ENCODE measurements at regions of chr16 and their contacts with region 1.

Region 1: DNA sequence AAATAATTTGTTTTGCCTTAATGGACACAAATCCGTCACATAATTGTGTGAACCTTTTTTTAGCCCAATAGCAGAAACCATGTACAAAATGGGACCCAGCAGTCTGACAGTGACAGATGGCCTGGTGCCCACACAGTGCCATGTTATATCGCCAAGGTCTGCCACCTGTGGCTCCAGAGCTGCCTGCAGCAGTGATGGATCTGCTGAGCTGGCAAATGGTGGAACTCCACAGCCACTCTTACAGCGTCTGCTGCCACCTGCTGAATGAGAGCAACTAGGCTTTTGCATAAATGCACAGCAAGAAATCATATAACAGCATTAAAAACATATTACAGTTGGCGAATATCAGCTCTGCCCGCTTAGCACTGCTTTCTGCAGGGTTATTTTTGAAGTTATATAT is 59.4 kb downstream of the NUP93 start:
- DNase-seq: no peak
- H3K4me3 ChIP-seq: no peak overlapping the region
- CTCF ChIP-seq: peak; percentile 50

Region 2: GRCh38 chr16:56643080-56643778 is 146.1 kb before region 1 on chr16:
- CTCF ChIA-PET with region 1: no interaction called
- POLR2A ChIA-PET with region 1: no interaction called
- DNase-seq: no peak
- H3K4me3 ChIP-seq: peak overlapping the region; percentile 30
- CTCF ChIP-seq: peak; percentile 9

Region 3: DNA sequence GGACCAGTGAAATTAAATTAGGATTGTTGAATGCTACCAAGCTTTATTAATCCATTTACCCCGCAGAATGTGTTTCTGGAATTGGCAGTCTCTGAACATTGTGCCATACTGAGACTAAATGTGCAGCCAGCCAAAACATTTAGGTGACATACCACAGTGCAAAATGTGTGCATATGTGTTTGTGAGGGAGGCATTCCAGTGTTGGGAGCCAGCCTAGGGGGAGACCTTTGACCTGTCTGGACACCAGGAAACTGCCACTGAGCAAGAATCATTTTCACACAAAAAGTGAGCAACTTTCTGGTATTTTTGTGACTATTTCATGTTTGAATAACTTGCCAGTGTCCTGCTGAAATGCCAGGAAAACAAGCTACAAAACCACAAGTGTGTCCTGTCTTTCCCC is 11.0 kb after region 1 on chr16:
- CTCF ChIA-PET with region 1: interaction called, 108 read pairs
- POLR2A ChIA-PET with region 1: no interaction called
- DNase-seq: no peak
- H3K4me3 ChIP-seq: no peak overlapping the region
- CTCF ChIP-seq: no peak

Region 4: DNA sequence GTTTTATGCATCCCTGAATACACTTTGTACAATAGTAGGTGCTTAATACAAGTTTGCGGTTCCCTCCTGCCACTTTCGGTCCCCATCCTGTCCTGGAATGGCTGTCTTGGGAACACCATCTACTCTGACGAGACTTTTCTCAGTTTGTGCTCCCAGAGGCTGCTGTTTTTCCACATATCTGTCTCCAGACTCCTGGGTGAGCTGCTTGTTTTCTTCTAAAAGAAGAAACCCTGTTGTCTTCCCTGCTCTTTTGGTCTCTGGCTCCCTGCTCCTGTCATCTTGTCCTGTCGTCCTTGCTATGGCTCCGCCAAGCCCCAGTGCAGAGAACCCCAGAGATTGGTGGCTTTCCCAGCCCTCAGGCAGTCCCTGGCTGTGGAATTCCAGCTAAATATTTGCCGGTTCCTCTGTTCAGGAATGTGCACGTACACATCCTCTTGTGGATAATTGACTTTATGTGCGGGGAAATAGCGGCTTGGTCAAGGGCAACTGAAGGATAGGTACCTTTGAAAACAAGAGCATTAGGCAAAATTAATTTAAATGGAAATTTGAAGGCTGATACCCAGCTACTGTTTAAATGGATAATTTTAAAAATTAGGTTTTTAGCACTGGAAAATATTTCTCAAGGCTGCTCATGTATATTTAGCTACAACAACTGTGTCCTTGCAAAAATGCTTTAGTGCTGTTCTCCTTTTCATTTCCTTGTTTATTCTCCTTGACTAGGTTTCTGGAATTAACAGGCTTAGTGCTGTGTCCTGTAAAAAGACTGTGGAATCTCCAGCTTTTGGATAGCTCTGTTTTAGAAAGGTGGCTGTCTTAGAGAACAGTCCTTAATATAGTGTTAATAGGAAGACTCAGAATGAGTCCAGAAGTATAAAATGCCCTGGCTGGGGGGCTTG is 25.4 kb after region 1 on chr16:
- CTCF ChIA-PET with region 1: interaction called, 28 read pairs
- POLR2A ChIA-PET with region 1: no interaction called
- DNase-seq: no peak
- H3K4me3 ChIP-seq: no peak overlapping the region
- CTCF ChIP-seq: no peak

Region 5: DNA sequence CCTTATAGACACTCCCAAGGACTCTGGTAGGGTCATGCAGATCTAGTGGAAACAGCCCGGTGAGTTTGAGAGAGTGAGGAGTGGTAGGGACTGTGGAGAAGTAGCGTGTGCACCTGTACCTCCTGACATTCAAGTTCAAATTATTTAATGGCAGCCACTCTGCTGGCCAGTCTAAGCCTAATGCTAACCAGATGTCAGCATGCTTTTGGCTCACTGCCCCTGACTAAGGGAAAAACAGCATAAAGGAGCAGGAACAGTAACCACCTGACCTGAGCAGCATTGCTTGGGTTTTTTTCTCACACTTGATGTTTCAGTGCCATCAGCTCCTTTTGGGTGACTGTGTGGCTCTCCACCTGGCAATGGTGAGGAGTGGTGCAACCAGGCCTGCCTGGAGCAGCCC is 51.9 kb after region 1 on chr16:
- CTCF ChIA-PET with region 1: interaction called, 13 read pairs
- POLR2A ChIA-PET with region 1: no interaction called
- DNase-seq: no peak
- H3K4me3 ChIP-seq: no peak overlapping the region
- CTCF ChIP-seq: no peak

Region 6: GRCh38 chr16:56898847-56899246 is 109.5 kb after region 1 on chr16:
- CTCF ChIA-PET with region 1: no interaction called
- POLR2A ChIA-PET with region 1: no interaction called
- DNase-seq: no peak
- H3K4me3 ChIP-seq: no peak overlapping the region
- CTCF ChIP-seq: no peak

Region 7: DNA sequence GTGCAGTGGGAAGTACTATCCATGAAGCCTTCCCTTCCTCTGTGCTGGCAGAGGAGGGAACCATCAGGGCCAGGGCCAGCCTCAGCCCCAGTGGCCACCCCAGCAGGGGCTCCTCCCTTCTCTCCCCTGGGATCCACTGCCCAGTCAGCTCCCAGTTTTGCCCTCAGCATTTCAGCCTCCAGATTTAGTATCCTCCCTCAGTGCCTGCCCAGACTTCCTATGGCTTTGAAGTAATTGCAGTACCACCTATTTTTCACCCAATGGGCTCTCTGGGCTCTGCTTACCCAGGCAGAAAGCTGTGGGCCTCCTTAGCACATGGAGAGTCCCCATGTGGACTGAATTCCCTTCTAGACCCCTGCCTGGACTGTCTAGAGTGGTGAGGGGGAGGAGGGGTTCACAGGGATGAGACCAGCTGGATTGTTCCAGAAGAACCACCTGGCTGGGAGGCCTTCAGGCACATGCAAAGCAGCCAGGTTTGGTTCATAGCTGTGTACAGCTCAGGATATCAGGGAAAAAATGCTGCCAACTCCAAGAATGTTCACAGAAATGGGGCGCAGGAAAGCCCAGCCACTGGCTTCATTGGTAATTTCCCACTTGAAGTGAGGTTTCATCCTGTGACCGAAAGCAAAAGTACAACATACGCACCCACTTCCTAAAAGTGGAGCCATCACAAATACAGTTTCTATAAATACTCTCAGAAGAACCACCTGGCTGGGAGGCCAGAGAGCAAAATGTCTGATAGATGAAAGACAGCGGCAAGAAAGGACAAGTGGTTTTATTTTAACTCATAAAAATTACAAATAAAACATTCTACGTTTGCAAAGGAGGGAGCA is 127.4 kb after region 1 on chr16:
- CTCF ChIA-PET with region 1: no interaction called
- POLR2A ChIA-PET with region 1: no interaction called
- DNase-seq: no peak
- H3K4me3 ChIP-seq: no peak overlapping the region
- CTCF ChIP-seq: no peak

Region 8: DNA sequence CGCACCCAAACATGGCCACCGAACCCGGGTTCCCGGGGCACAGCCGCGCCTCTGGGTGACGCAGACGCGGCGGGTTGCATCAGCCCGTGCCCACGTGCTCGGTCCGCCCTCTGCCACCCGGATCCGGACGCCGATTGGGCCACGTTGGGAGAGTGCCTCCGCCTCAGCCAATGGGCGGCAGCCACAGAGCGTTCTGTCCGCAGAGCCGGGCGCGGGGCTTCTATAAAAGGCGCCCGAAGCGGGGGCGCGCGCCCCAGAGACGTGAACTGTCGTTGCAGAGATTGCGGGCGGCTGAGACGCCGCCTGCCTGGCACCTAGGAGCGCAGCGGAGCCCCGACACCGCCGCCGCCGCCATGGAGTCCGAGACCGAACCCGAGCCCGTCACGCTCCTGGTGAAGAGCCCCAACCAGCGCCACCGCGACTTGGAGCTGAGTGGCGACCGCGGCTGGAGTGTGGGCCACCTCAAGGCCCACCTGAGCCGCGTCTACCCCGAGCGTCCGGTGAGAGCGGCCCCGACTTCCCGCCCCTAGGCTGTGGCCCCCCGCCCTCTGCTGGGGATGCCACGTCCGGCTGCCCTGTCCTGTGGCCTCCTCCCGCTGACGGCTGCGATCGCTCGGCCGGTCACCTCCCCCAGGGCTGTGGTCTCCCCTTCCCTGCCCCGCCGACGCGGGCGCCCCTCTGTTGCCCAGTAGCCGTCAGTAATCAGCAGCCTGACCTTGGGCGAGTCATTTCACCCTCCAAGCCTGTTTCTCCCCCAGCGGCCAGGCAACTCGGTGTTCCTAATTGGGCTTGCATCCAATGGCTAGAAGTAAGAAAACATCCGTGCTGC is 142.7 kb after region 1 on chr16 and contains the start of gene HERPUD1:
- CTCF ChIA-PET with region 1: interaction called, 14 read pairs
- POLR2A ChIA-PET with region 1: interaction called, 4 read pairs
- DNase-seq: peak; percentile 82
- H3K4me3 ChIP-seq: peak within 1 kb of the TSS; percentile 89
- CTCF ChIP-seq: peak; percentile 2

Region 9: DNA sequence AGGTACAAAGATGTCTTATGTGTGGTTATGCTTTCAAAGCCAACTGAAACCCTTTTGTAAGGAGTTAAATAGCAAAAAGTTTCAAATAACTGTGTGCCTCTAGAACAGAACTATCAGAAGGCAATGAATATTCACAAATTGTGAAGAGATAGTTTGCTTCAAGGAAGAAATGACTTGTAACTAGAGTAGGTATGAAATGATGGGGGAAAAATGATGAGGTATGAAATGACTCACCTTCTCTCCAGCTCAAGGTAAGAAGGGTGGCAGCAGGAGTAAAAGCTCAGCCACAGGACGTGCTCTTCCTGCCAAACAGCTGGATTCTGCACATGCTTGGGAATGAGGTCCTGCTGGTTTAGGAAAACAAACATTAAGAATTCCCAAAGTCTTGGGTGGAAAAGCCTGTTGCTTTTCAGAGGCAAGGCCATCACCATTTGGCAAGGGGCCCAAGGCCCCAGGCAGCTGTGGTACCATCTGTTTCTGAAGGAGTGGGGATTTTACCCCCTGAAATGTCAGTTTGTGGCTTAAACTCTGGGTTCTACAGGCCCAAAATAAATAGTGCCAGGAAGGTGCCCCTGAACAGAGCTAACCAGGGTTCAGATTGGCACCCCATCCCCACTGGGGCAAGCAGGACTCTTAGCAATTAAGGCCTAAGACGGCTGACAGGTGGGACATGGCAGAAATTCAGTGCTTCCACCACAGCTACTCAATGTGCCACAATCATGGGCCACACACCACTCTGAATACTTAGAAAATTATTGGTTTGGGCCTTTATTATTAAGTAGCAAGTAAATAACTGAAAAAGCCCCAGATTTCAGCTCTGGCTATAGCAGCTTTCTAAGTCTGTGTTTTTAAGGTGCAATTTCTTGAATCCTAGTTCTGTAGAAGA is 155.8 kb after region 1 on chr16:
- CTCF ChIA-PET with region 1: interaction called, 40 read pairs
- POLR2A ChIA-PET with region 1: no interaction called
- DNase-seq: no peak
- H3K4me3 ChIP-seq: no peak overlapping the region
- CTCF ChIP-seq: no peak

Measured in AG04449 (cell line).